CD4-positive, alpha-beta memory T cell (primary cell): ENCODE measurements at regions of chr2 and their contacts with region 1.

Region 1: DNA sequence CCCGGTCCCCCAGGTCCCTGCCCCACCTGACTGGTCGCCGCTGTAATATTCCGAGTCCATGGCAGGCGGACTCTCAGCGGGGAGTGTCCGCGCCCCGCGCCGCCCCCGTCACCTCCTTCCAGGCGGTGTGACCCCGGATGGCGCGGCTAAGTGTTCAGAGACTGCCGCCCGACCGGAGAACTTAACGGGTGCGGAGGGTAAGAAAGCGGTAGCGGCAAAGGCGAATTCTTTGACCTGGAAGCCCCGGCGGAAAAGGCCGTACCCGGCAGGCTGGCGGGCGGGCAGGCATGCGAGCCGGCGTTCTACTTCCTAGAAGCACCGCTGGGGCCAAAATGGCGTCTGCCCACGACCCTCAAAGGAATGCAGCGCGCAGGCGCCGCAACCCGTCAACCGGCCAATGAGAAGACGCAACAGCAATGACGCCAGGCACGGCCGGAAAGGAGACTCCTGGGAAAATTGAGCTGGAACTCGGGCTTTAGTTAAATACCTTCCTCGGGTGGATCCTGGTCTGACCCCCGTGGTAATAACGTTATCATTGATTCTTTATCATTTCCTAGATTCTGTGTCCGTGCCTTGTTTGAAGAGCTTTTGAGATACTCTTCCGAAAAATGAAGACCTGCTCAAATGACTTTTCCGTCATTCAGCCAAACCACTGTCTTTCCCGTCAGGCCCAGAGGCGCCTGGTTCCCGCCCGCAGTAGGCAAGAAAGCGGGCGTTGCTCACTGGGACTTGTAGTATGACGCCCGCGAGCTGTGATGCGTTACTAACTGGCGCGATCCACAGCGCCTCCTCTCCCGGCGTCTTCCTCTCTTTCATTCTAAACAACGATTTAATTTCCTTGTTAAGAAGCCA is at the start of gene IWS1:
- DNase-seq: peak; percentile 93 to 95 (median 94)
- H3K4me3 ChIP-seq: peak within 1 kb of the TSS; percentile 61
- H3K4me3 Mint-ChIP-seq: peak within 1 kb of the TSS; percentile 88 to 99 (median 96)
- H3K27ac ChIP-seq: peak within 1 kb of the TSS; percentile 98
- H3K27ac Mint-ChIP-seq: peak within 1 kb of the TSS; percentile 96 to 100 (median 98)
- H3K4me1 ChIP-seq: peaks cover 47% of the 10 kb centered on the region
- H3K4me1 Mint-ChIP-seq: peaks cover 26 to 62% (median 33%) of the 10 kb centered on the region in 4 donors
- H3K27me3 ChIP-seq: no peaks in the 10 kb centered on the region
- H3K27me3 Mint-ChIP-seq: no peaks in the 10 kb centered on the region
- total RNA-seq, gene IWS1: 55.2 to 59.7 TPM

Region 2: GRCh38 chr2:127086990-127087790 is 439.2 kb before region 1 on chr2:
- CTCF ChIA-PET with region 1: interaction called, 3 read pairs
- POLR2A ChIA-PET with region 1: no interaction called
- intact Hi-C with region 1: loop called (anchors 10 kb)
- DNase-seq: no peak
- H3K4me3 ChIP-seq: no peak overlapping the region
- H3K4me3 Mint-ChIP-seq: no peak overlapping the region
- H3K27ac ChIP-seq: no peak overlapping the region
- H3K27ac Mint-ChIP-seq: peak overlapping the region in 4 of 7 donors; percentile 15 to 66 (median 59)
- H3K4me1 ChIP-seq: peaks cover 38% of the 10 kb centered on the region
- H3K4me1 Mint-ChIP-seq: peaks cover 13 to 43% (median 28%) of the 10 kb centered on the region in 4 donors
- H3K27me3 ChIP-seq: no peaks in the 10 kb centered on the region
- H3K27me3 Mint-ChIP-seq: peaks cover 0 to 2% of the 10 kb centered on the region in 2 donors

Region 3: GRCh38 chr2:127659408-127660290 is 133.3 kb after region 1 on chr2:
- CTCF ChIA-PET with region 1: no interaction called
- POLR2A ChIA-PET with region 1: no interaction called
- intact Hi-C with region 1: no loop called
- DNase-seq: peak in 1 of 5 donors; percentile 35
- H3K4me3 ChIP-seq: no peak overlapping the region
- H3K4me3 Mint-ChIP-seq: no peak overlapping the region
- H3K27ac ChIP-seq: no peak overlapping the region
- H3K27ac Mint-ChIP-seq: no peak overlapping the region
- H3K4me1 ChIP-seq: no peaks in the 10 kb centered on the region
- H3K4me1 Mint-ChIP-seq: no peaks in the 10 kb centered on the region
- H3K27me3 ChIP-seq: peaks cover 14% of the 10 kb centered on the region
- H3K27me3 Mint-ChIP-seq: peaks cover 14 to 23% of the 10 kb centered on the region in 2 donors

Region 4: DNA sequence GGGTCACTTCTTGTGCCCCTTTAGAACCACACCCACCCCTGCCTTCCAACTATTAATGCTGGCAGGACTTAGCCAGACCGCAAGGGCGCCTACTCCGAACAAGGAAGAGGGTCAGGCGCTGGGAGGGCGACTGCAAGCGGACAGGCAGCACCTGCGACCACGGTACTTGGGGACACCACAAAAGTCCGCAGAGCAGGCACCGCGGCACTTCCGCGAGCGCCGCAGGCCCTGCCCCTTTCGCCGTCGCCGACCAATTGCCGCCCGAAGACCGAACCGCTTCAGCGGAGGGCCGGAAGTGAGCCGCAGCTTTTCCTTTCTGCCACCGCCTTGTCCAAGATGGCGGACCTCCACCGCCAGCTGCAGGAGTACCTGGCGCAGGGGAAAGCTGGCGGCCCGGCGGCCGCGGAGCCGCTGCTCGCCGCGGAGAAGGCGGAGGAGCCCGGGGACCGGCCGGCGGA is 174.8 kb after region 1 on chr2 and contains the start of gene SFT2D3:
- CTCF ChIA-PET with region 1: no interaction called
- POLR2A ChIA-PET with region 1: interaction called, 18 read pairs
- intact Hi-C with region 1: loop called (anchors 1 kb)
- DNase-seq: peak; percentile 89 to 92 (median 91)
- H3K4me3 ChIP-seq: peak within 1 kb of the TSS; percentile 74 to 93
- H3K4me3 Mint-ChIP-seq: peak within 1 kb of the TSS; percentile 91 to 95 (median 92)
- H3K27ac ChIP-seq: peak within 1 kb of the TSS; percentile 90
- H3K27ac Mint-ChIP-seq: peak within 1 kb of the TSS; percentile 97 to 99 (median 98)
- H3K4me1 ChIP-seq: peaks cover 42% of the 10 kb centered on the region
- H3K4me1 Mint-ChIP-seq: peaks cover 25 to 53% (median 34%) of the 10 kb centered on the region in 4 donors
- H3K27me3 ChIP-seq: no peaks in the 10 kb centered on the region
- H3K27me3 Mint-ChIP-seq: no peaks in the 10 kb centered on the region
- total RNA-seq, gene SFT2D3: 14.4 to 15.4 TPM

Region 5: GRCh38 chr2:127857265-127857808 is 331.0 kb after region 1 on chr2:
- CTCF ChIA-PET with region 1: no interaction called
- POLR2A ChIA-PET with region 1: no interaction called
- intact Hi-C with region 1: loop called (anchors 1 kb)
- DNase-seq: peak in 1 of 5 donors; percentile 11
- H3K4me3 ChIP-seq: peak overlapping the region; percentile 70 to 78
- H3K4me3 Mint-ChIP-seq: peak overlapping the region; percentile 89 to 98 (median 93)
- H3K27ac ChIP-seq: peak overlapping the region; percentile 80
- H3K27ac Mint-ChIP-seq: peak overlapping the region; percentile 73 to 96 (median 93)
- H3K4me1 ChIP-seq: peaks cover 53% of the 10 kb centered on the region
- H3K4me1 Mint-ChIP-seq: peaks cover 26 to 62% (median 41%) of the 10 kb centered on the region in 4 donors
- H3K27me3 ChIP-seq: no peaks in the 10 kb centered on the region
- H3K27me3 Mint-ChIP-seq: no peaks in the 10 kb centered on the region

Region 6: GRCh38 chr2:128090945-128091725 is 564.8 kb after region 1 on chr2 and contains the start of gene UGGT1:
- CTCF ChIA-PET with region 1: no interaction called
- POLR2A ChIA-PET with region 1: interaction called, 7 read pairs
- intact Hi-C with region 1: loop called (anchors 1 kb)
- DNase-seq: peak; percentile 91 to 95 (median 93)
- H3K4me3 ChIP-seq: peak within 1 kb of the TSS; percentile 86 to 98
- H3K4me3 Mint-ChIP-seq: peak within 1 kb of the TSS; percentile 88 to 98 (median 93)
- H3K27ac ChIP-seq: peak within 1 kb of the TSS; percentile 81
- H3K27ac Mint-ChIP-seq: peak within 1 kb of the TSS; percentile 90 to 98 (median 96)
- H3K4me1 ChIP-seq: peaks cover 33% of the 10 kb centered on the region
- H3K4me1 Mint-ChIP-seq: peaks cover 27 to 61% (median 40%) of the 10 kb centered on the region in 4 donors
- H3K27me3 ChIP-seq: no peaks in the 10 kb centered on the region
- H3K27me3 Mint-ChIP-seq: no peaks in the 10 kb centered on the region
- total RNA-seq, gene UGGT1: 56.8 to 60.2 TPM